ENCODE measurements at regions of chr22 and their contacts with region 1.

Region 1: GRCh38 chr22:22877523-22878210 is 9.9 kb upstream of the IGLL5 start:
- DNase-seq: peak; percentile 36 to 88 (median 71)
- ATAC-seq: peak; percentile 43 to 65 (median 60)
- H3K4me3 ChIP-seq: no peak overlapping the region
- H3K4me3 Mint-ChIP-seq: no peak overlapping the region
- H3K27ac ChIP-seq: no peak overlapping the region
- H3K27ac Mint-ChIP-seq: peak overlapping the region; percentile 12 to 36
- H3K4me1 ChIP-seq: no peaks in the 10 kb centered on the region
- H3K4me1 Mint-ChIP-seq: peaks cover 0 to 5% (median 2%) of the 10 kb centered on the region in 3 donors
- H3K27me3 ChIP-seq: no peaks in the 10 kb centered on the region
- H3K27me3 Mint-ChIP-seq: no peaks in the 10 kb centered on the region

Region 2: GRCh38 chr22:22745225-22746060 is 132.2 kb before region 1 on chr22:
- CTCF ChIA-PET with region 1: interaction called in 1 of 2 experiments, 13 read pairs
- POLR2A ChIA-PET with region 1: no interaction called
- DNase-seq: peak in 29 of 35 experiments; percentile 11 to 63 (median 37)
- ATAC-seq: peak in 3 of 4 experiments; percentile 57 to 71 (median 69)
- H3K4me3 ChIP-seq: no peak overlapping the region
- H3K4me3 Mint-ChIP-seq: no peak overlapping the region
- H3K27ac ChIP-seq: no peak overlapping the region
- H3K27ac Mint-ChIP-seq: peak overlapping the region; percentile 6 to 36
- H3K4me1 ChIP-seq: peaks cover 0 to 35% of the 10 kb centered on the region in 2 experiments
- H3K4me1 Mint-ChIP-seq: peaks cover 0 to 26% (median 9%) of the 10 kb centered on the region in 3 donors
- H3K27me3 ChIP-seq: peaks cover 0 to 8% of the 10 kb centered on the region in 2 experiments
- H3K27me3 Mint-ChIP-seq: peaks cover 10 to 22% of the 10 kb centered on the region in 2 donors

Region 3: DNA sequence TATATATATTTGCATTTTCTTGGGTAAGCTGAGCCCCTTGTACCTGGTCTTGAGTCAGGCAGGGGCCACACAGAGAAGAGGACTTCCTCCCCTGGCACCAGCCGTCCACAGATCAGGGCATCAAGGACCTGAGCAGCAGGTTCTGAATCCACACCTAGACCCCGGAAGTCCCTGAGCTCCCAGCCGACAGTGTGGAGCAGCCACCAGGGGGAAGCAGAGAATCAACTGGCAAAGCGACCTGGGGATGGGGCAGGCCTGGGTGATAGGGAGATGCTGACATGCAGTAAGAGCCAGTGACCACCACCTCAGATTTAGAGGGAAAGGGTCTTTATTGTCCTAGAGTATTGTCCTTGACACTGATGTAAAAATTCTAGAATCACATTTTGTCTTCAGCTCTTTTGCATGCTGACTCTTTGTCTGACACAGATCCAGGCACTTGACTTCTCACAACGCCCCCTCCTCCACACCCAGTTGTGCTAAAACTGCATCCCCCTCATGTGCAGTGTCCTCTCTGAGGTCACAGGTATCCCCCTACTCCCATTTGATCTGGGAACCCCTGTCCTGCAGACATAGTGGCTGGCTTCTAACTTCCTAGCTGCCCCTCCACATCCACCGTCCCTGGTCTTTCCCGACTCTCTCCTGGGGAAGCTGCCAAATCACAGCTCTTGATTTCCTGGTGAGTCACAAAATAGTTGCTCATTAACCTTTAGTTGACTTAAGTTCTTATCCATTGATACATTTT is 124.0 kb before region 1 on chr22:
- CTCF ChIA-PET with region 1: interaction called in 1 of 2 experiments, 50 read pairs
- POLR2A ChIA-PET with region 1: no interaction called
- DNase-seq: peak; percentile 61 to 89 (median 78)
- ATAC-seq: peak; percentile 84 to 91 (median 88)
- H3K4me3 ChIP-seq: peak overlapping the region in 1 of 2 donors; percentile 3
- H3K4me3 Mint-ChIP-seq: peak overlapping the region in 2 of 3 donors; percentile 13 to 52
- H3K27ac ChIP-seq: peak overlapping the region; percentile 78
- H3K27ac Mint-ChIP-seq: peak overlapping the region; percentile 96 to 99
- H3K4me1 ChIP-seq: peaks cover 3 to 61% of the 10 kb centered on the region in 2 experiments
- H3K4me1 Mint-ChIP-seq: peaks cover 38 to 60% (median 40%) of the 10 kb centered on the region in 3 donors
- H3K27me3 ChIP-seq: no peaks in the 10 kb centered on the region
- H3K27me3 Mint-ChIP-seq: no peaks in the 10 kb centered on the region

Region 4: GRCh38 chr22:22787786-22788459 is 89.7 kb before region 1 on chr22:
- CTCF ChIA-PET with region 1: interaction called in 1 of 2 experiments, 22 read pairs
- POLR2A ChIA-PET with region 1: no interaction called
- DNase-seq: peak; percentile 24 to 82 (median 58)
- ATAC-seq: peak; percentile 66 to 78 (median 68)
- H3K4me3 ChIP-seq: no peak overlapping the region
- H3K4me3 Mint-ChIP-seq: no peak overlapping the region
- H3K27ac ChIP-seq: peak overlapping the region; percentile 80
- H3K27ac Mint-ChIP-seq: peak overlapping the region; percentile 82 to 84
- H3K4me1 ChIP-seq: peaks cover 16 to 64% of the 10 kb centered on the region in 2 experiments
- H3K4me1 Mint-ChIP-seq: peaks cover 29 to 57% (median 49%) of the 10 kb centered on the region in 3 donors
- H3K27me3 ChIP-seq: peaks cover 0 to 3% of the 10 kb centered on the region in 2 experiments
- H3K27me3 Mint-ChIP-seq: peaks cover 0 to 5% of the 10 kb centered on the region in 2 donors

Region 5: GRCh38 chr22:22810018-22810427 is 67.6 kb before region 1 on chr22:
- CTCF ChIA-PET with region 1: interaction called, 11 to 43 read pairs
- POLR2A ChIA-PET with region 1: interaction called in 1 of 2 experiments, 7 read pairs
- DNase-seq: peak in 31 of 35 experiments; percentile 31 to 92 (median 67)
- ATAC-seq: peak; percentile 85 to 93 (median 85)
- H3K4me3 ChIP-seq: no peak overlapping the region
- H3K4me3 Mint-ChIP-seq: peak overlapping the region in 1 of 3 donors; percentile 40
- H3K27ac ChIP-seq: peak overlapping the region; percentile 11
- H3K27ac Mint-ChIP-seq: peak overlapping the region; percentile 50 to 70
- H3K4me1 ChIP-seq: peaks cover 3 to 45% of the 10 kb centered on the region in 2 experiments
- H3K4me1 Mint-ChIP-seq: peaks cover 37 to 66% (median 59%) of the 10 kb centered on the region in 3 donors
- H3K27me3 ChIP-seq: no peaks in the 10 kb centered on the region
- H3K27me3 Mint-ChIP-seq: no peaks in the 10 kb centered on the region

Region 6: DNA sequence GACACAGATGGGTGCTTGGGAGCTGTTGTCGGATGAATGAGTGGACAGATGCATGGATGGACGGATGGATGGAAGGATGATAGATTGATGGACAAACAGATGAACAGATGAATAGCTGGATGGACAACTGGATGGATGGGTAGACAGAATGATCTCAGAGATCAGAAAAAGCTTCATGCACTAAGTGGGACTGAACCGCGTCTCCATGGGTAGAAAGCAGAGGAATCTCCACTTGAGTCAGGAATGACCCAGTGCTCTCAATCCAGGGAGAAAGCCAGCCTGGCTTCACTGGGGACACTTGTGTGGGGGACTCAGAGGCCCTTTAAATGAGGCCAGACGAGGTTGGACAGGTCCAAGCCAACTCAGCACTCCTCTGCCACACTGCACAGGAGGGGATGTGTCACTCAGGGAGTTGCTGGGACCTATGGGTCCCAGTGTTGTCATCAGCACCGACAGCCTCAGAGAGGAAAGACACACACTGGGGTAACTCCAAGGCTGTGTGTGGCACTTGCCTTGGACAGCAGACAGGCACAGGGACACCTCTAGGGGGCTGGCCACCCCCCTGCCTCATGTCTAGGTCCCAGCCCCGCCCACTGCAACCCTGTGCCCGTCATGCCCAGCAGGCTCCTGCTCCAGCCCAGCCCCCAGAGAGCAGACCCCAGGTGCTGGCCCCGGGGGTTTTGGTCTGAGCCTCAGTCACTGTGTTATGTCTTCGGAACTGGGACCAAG is 15.6 kb after region 1 on chr22:
- CTCF ChIA-PET with region 1: no interaction called
- POLR2A ChIA-PET with region 1: no interaction called
- DNase-seq: peak in 1 of 35 experiments; percentile 2
- ATAC-seq: no peak
- H3K4me3 ChIP-seq: no peak overlapping the region
- H3K4me3 Mint-ChIP-seq: no peak overlapping the region
- H3K27ac ChIP-seq: no peak overlapping the region
- H3K27ac Mint-ChIP-seq: no peak overlapping the region
- H3K4me1 ChIP-seq: peaks cover 0 to 5% of the 10 kb centered on the region in 2 experiments
- H3K4me1 Mint-ChIP-seq: no peaks in the 10 kb centered on the region
- H3K27me3 ChIP-seq: peaks cover 0 to 30% of the 10 kb centered on the region in 2 experiments
- H3K27me3 Mint-ChIP-seq: peaks cover 14 to 34% of the 10 kb centered on the region in 2 donors